HAP-1 (cell line): ENCODE measurements at regions of chr16 and their contacts with region 1.

Region 1: DNA sequence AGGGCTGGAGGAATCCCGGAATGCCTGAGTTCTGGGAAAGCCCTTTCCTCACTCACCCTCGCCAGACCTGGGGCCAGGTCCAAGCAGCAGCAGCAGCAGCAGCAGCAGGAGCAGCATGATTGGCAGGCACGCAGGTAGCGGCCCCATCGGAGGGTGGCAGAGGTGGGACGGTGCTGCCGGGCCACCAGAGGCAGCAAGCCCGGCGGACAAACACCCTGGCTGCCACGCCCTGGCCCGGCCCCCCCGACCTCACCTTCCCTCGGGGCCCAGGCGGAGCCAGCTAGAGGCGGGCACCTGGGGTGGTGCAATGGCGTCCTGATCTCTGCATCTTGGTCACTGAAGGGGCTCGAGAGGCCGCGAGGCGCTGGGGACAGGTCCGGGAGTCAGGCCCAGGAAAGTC is 122.4 kb downstream of the LAT start:
- DNase-seq: no peak
- H3K4me3 ChIP-seq: no peak overlapping the region
- H3K4me1 ChIP-seq: no peaks in the 10 kb centered on the region
- H3K27me3 ChIP-seq: no peaks in the 10 kb centered on the region

Region 2: GRCh38 chr16:29007730-29008593 is 99.3 kb before region 1 on chr16:
- in situ Hi-C with region 1: loop called (anchors 25 kb)
- DNase-seq: no peak
- H3K4me3 ChIP-seq: no peak overlapping the region
- H3K4me1 ChIP-seq: no peaks in the 10 kb centered on the region
- H3K27me3 ChIP-seq: no peaks in the 10 kb centered on the region

Region 3: DNA sequence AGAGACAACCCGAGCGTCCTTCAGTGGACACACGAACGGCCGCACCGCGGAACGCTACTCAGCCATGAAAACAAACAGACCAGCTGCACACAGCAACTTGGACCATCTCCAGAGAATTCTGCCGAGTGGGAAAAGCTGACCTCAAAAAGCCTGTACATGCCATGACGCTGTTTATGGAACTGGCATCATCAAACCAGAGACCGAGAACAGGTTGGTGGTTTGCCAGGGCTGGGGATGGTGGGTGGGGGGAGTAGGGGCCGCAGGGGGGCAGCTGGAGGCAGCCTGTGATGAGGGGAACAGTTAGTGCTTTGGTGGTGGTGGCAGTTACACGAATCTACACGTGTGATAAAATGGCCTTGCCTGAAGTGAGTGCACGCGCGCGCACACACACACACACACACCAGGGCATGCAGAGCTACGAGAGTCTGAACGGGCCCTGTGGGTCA is 47.4 kb after region 1 on chr16:
- in situ Hi-C with region 1: no loop called
- DNase-seq: no peak
- H3K4me3 ChIP-seq: no peak overlapping the region
- H3K4me1 ChIP-seq: no peaks in the 10 kb centered on the region
- H3K27me3 ChIP-seq: no peaks in the 10 kb centered on the region

Region 4: DNA sequence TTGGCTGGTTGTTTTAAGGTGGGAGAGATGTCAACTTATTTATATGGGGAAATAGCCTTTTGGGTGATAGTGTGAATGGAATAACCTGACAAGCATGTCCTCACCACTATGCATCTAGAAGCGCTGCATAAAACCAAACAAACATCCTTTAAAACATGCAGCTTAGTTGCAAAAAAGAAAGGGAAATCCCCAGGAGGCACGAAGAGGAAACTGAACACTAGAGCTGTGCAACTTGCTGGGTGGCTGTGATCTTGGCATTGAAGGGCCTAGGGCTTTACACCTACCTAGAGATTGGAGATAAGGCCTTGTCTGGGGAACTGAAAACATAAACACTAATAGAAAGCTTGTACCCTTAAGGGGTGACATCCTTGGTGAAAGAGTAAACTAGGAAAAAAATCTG is 631.2 kb after region 1 on chr16:
- in situ Hi-C with region 1: no loop called
- DNase-seq: no peak
- H3K4me3 ChIP-seq: no peak overlapping the region
- H3K4me1 ChIP-seq: no peaks in the 10 kb centered on the region
- H3K27me3 ChIP-seq: no peaks in the 10 kb centered on the region

Region 5: GRCh38 chr16:30032083-30032819 is 925.0 kb after region 1 on chr16:
- in situ Hi-C with region 1: loop called (anchors 25 kb)
- DNase-seq: peak; percentile 70 to 80
- H3K4me3 ChIP-seq: no peak overlapping the region
- H3K4me1 ChIP-seq: no peaks in the 10 kb centered on the region
- H3K27me3 ChIP-seq: peaks cover 35% of the 10 kb centered on the region